WTC11 (cell line): ENCODE measurements at regions of chr11 and their contacts with region 1.

Region 1: GRCh38 chr11:47454180-47454644 is 5.3 kb upstream of the RAPSN start:
- DNase-seq: peak; percentile 70
- ATAC-seq: peak; percentile 88
- H3K4me3 Mint-ChIP-seq: no peak overlapping the region
- H3K27ac Mint-ChIP-seq: peak overlapping the region; percentile 54
- H3K4me1 Mint-ChIP-seq: no peaks in the 10 kb centered on the region
- H3K27me3 Mint-ChIP-seq: no peaks in the 10 kb centered on the region
- CTCF ChIP-seq: no peak

Region 2: DNA sequence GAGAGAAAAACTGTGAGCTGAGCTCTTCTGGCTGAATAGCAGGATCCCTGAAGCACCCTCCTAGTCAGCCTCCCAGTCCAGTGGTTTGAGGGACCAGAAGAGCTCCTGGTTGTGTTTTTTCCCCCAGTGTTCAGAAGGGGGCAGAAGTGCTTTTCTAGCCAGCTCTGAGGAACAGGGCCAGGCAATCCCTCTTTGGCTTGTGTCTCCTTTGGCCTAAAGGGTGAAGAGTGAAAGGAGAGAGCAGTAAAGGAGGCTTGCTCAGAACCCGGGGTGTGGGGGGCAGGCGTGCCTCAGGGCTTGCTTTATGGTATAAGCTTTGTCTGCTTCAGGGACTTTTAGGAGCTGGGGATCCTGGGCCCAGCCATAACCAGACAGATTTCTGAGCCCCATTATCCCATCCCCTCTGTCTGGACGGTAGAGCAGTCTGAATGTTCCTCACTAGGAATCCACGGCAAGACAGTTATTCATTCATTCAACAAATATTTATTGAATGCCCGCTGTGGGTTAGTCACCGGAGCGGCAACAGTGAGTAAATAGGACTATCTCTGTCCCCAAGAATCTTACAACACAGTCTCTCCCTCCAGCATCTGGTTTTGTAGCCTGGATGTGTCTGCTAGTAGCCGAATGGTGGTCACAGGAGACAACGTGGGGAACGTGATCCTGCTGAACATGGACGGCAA is 220.1 kb before region 1 on chr11:
- CTCF ChIA-PET with region 1: interaction called, 10 read pairs
- POLR2A ChIA-PET with region 1: no interaction called
- DNase-seq: peak; percentile 22
- ATAC-seq: peak; percentile 86
- H3K4me3 Mint-ChIP-seq: no peak overlapping the region
- H3K27ac Mint-ChIP-seq: peak overlapping the region; percentile 75
- H3K4me1 Mint-ChIP-seq: peaks cover 3% of the 10 kb centered on the region; the same call in 1 of the 2 replicates
- H3K27me3 Mint-ChIP-seq: no peaks in the 10 kb centered on the region
- CTCF ChIP-seq: no peak

Region 3: GRCh38 chr11:47276923-47277322 is 177.3 kb before region 1 on chr11:
- CTCF ChIA-PET with region 1: no interaction called
- POLR2A ChIA-PET with region 1: no interaction called
- DNase-seq: no peak
- ATAC-seq: no peak
- H3K4me3 Mint-ChIP-seq: no peak overlapping the region
- H3K27ac Mint-ChIP-seq: no peak overlapping the region
- H3K4me1 Mint-ChIP-seq: peaks cover 14% of the 10 kb centered on the region
- H3K27me3 Mint-ChIP-seq: no peaks in the 10 kb centered on the region
- CTCF ChIP-seq: no peak

Region 4: GRCh38 chr11:47348859-47349258 is 105.4 kb before region 1 on chr11:
- CTCF ChIA-PET with region 1: no interaction called
- POLR2A ChIA-PET with region 1: no interaction called
- DNase-seq: peak; percentile 36
- ATAC-seq: peak; percentile 53
- H3K4me3 Mint-ChIP-seq: no peak overlapping the region
- H3K27ac Mint-ChIP-seq: no peak overlapping the region
- H3K4me1 Mint-ChIP-seq: peaks cover 8% of the 10 kb centered on the region; the same call in 1 of the 2 replicates
- H3K27me3 Mint-ChIP-seq: no peaks in the 10 kb centered on the region
- CTCF ChIP-seq: no peak

Region 5: GRCh38 chr11:47407746-47408590 is 46.2 kb before region 1 on chr11 and contains the start of gene SLC39A13:
- CTCF ChIA-PET with region 1: interaction called, 16 read pairs
- POLR2A ChIA-PET with region 1: no interaction called
- DNase-seq: peak; percentile 94
- ATAC-seq: peak; percentile 88
- H3K4me3 Mint-ChIP-seq: peak within 1 kb of the TSS; percentile 95
- H3K27ac Mint-ChIP-seq: peak within 1 kb of the TSS; percentile 99
- H3K4me1 Mint-ChIP-seq: peaks cover 15% of the 10 kb centered on the region
- H3K27me3 Mint-ChIP-seq: no peaks in the 10 kb centered on the region
- CTCF ChIP-seq: peak; percentile 71
- total RNA-seq, gene SLC39A13: 32.8 to 38.2 TPM (median 35.1 TPM) in 3 replicates

Region 6: DNA sequence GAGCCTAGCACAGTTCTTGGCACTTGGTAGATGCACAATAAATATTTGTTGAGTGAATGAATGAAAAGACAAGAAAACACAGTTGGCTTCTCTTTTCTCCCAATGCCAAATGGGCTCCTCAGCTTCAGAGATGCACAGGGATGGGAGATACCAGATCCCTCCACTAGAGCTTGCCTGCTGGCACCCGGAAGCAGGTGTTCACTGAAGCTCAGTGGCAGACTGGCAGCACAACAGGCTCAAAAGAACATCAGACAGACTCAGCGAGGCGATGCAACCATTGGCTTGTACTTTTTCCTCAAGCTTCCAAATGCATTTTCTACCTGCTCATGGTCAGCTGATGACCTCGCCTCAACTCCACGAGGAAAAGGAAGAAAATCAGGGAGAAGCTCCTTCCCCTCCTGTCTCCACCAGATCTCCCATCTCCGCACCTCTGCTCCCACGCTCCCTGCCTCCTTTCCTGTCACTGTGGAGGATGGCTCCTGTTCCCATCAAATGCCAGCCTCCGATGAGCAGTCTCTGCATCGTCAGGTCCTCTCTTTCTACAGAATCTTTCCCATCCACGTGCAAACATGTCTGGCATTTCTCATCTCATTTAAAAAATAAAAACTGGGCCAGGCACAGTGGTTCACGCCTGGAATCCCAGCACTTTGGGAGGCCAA is 11.0 kb before region 1 on chr11:
- CTCF ChIA-PET with region 1: interaction called, 30 read pairs
- POLR2A ChIA-PET with region 1: interaction called, 5 read pairs
- DNase-seq: no peak
- ATAC-seq: peak; percentile 60
- H3K4me3 Mint-ChIP-seq: no peak overlapping the region
- H3K27ac Mint-ChIP-seq: no peak overlapping the region; the same call in 1 of the 2 replicates
- H3K4me1 Mint-ChIP-seq: no peaks in the 10 kb centered on the region
- H3K27me3 Mint-ChIP-seq: no peaks in the 10 kb centered on the region
- CTCF ChIP-seq: no peak

Region 7: DNA sequence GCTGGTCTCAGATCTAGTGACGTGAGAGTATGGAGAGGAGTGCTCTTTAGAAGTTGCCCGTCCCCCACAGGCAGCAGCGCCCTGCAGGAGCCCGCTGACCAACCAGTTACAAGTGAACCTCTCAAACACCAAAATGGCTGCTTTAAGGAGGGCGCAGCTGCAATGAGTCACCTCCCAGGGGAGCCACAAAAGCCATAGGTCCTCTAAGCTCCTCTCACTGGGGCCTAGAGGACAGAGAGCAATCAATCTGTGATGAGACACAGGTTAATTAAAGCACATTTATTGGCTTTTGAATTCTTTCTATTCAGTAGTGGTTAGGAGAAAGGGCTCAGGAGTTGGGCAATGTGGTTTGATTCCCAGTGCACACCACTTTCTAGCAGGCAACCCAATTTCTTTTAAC is 10.3 kb after region 1 on chr11:
- CTCF ChIA-PET with region 1: interaction called, 17 read pairs
- POLR2A ChIA-PET with region 1: no interaction called
- DNase-seq: peak; percentile 20
- ATAC-seq: peak; percentile 32
- H3K4me3 Mint-ChIP-seq: no peak overlapping the region
- H3K27ac Mint-ChIP-seq: no peak overlapping the region
- H3K4me1 Mint-ChIP-seq: peaks cover 48% of the 10 kb centered on the region
- H3K27me3 Mint-ChIP-seq: no peaks in the 10 kb centered on the region
- CTCF ChIP-seq: no peak